Prostate gland (tissue), 2 donors: ENCODE measurements at regions of chr15 and their contacts with region 1.

Region 1: GRCh38 chr15:35751413-35752133 is 205.6 kb upstream of the DPH6 start:
- DNase-seq: peak; percentile 64
- H3K4me3 ChIP-seq: no peak overlapping the region
- H3K27ac ChIP-seq: no peak overlapping the region
- H3K4me1 ChIP-seq: no peaks in the 10 kb centered on the region
- H3K27me3 ChIP-seq: no peaks in the 10 kb centered on the region
- CTCF ChIP-seq: peak; percentile 54 to 74 (median 60)
- POLR2A ChIP-seq: no peak

Region 2: GRCh38 chr15:35078221-35078915 is 673.2 kb before region 1 on chr15:
- intact Hi-C with region 1: loop called (anchors 5 kb)
- DNase-seq: peak; percentile 11
- H3K4me3 ChIP-seq: no peak overlapping the region
- H3K27ac ChIP-seq: peak overlapping the region in 1 of 2 donors; percentile 41
- H3K4me1 ChIP-seq: no peaks in the 10 kb centered on the region
- H3K27me3 ChIP-seq: no peaks in the 10 kb centered on the region
- CTCF ChIP-seq: peak in 3 of 4 experiments; percentile 59 to 72 (median 65)
- POLR2A ChIP-seq: no peak

Region 3: GRCh38 chr15:35376707-35377106 is 374.9 kb before region 1 on chr15:
- intact Hi-C with region 1: no loop called
- DNase-seq: no peak
- H3K4me3 ChIP-seq: no peak overlapping the region
- H3K27ac ChIP-seq: no peak overlapping the region
- H3K4me1 ChIP-seq: no peaks in the 10 kb centered on the region
- H3K27me3 ChIP-seq: no peaks in the 10 kb centered on the region
- CTCF ChIP-seq: no peak
- POLR2A ChIP-seq: no peak

Region 4: DNA sequence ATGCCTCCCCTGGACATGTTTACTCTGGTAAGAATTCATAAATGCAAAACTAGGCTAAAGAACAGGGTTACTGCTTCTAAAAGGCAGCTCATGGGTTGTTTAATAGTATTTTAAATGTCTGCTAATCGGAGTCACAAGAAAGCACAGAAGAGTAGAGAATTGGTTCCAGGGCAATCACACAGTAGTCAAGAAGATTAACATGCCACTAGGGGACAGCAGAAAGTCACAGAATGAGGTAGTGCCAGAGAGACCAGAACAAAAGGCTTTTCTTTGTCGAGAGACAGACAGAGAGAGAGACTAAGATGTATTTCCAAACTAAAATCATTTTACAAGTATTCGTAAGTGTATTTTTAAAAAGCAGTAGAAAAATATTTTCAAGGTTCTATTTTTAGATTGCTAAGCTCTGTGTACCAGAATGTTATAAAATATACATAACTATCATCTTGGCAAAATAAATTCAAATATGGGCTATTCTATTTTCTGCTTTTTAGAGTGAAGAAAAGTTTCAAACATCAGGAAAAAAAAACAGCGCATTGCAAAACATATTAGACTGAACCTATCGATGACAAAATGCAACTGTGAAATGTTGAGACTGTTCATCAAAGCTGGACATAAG is 749.6 kb after region 1 on chr15:
- intact Hi-C with region 1: loop called (anchors 10 kb)
- DNase-seq: peak; percentile 46
- H3K4me3 ChIP-seq: no peak overlapping the region
- H3K27ac ChIP-seq: no peak overlapping the region
- H3K4me1 ChIP-seq: no peaks in the 10 kb centered on the region
- H3K27me3 ChIP-seq: no peaks in the 10 kb centered on the region
- CTCF ChIP-seq: peak; percentile 41 to 71 (median 58)
- POLR2A ChIP-seq: no peak

Region 5: DNA sequence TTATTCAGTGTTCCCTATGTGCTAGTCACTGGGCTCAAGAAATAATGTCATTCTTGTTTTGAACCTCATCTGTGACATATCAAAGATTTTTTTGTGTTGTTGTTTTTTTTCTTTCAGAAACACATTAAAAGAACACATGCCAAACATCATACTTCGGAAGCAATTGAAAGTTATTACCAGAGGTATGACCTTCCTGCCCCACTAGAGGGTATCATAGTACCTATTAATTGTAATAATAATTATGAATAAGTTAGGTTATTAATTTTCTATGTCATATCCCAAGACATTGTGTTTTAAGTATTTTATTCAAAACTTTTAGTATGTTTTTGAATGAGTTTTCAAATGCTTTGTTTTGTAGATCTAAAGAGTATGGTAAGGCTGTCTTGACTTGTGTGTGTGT is 893.5 kb after region 1 on chr15:
- intact Hi-C with region 1: loop called (anchors 10 kb)
- DNase-seq: no peak
- H3K4me3 ChIP-seq: no peak overlapping the region
- H3K27ac ChIP-seq: no peak overlapping the region
- H3K4me1 ChIP-seq: no peaks in the 10 kb centered on the region
- H3K27me3 ChIP-seq: no peaks in the 10 kb centered on the region
- CTCF ChIP-seq: peak in 2 of 4 experiments; percentile 42 to 45
- POLR2A ChIP-seq: no peak

Region 6: DNA sequence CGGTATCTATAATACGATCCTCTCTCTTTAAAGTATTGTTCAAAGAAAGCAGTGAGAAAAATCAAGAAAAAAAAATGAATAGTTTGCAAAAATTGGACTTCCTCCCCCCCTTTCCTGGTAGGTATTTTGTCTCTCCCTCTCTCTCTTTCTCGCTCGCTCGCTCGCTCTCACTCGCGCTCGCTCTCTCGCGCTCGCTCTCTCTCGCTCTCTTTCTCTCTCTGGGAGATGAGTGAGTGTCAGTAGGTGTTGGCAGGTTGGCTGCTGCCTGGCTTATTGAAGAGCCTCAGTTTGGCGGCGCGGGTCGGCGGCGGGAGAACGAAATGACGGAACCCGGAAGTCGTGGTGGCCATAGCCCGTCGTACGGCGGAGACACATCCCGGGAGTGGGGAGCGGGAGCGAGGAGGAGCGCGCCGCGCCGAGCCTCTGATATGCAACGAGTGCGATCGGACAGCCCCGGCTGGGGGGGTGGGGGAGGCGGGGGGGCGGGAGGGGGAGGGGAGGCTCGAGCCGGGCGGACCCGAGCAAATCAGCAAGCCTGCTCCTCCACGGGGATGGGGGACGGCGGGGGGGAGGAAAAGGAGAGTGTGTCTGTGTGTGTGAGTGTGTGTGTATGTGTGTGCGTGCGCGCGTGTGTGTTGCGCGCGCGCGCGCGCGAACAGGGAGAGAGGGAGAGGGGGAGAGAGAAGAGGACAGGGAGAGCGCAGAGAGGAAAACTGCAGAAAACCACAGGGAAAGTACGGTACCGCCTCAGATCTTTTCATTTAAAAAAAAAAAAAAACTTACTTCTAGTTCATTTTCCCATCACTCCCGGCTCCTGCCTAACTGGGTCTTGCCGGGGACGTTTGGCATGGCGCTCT is 1348.8 kb after region 1 on chr15 and contains the start of gene MEIS2:
- intact Hi-C with region 1: loop called (anchors 10 kb)
- DNase-seq: peak; percentile 91
- H3K4me3 ChIP-seq: peak within 1 kb of the TSS; percentile 57 to 65
- H3K27ac ChIP-seq: peak within 1 kb of the TSS; percentile 87 to 92
- H3K4me1 ChIP-seq: no peaks in the 10 kb centered on the region
- H3K27me3 ChIP-seq: no peaks in the 10 kb centered on the region
- CTCF ChIP-seq: no peak
- POLR2A ChIP-seq: peak; percentile 67
- total RNA-seq, gene MEIS2: 53.4 to 73.2 TPM